ENCODE measurements at regions of chr6 and their contacts with region 1.

Region 1: DNA sequence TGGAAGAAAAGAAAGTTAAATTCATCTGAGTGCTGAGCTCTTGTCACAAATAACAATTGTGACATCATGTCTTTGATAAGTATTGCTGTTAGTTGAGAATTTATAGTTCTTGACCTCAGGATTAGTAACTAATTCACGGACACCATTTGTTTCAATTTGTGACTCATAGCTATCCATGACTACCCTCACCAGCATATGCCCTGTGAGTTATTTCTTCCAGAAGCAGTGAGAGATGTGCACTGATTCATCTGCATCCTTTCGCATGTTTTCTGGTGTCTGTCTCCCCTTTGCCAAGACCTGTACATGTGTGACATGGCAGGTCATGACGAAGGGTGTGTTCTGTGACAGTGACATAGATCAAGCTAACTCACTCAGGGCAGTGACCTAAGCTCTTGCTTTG is 86.9 kb downstream of the SOBP start:
- DNase-seq: peak in 1 of 2 experiments; percentile 66
- H3K4me3 ChIP-seq: no peak overlapping the region
- H3K27ac ChIP-seq: no peak overlapping the region
- H3K4me1 ChIP-seq: no peaks in the 10 kb centered on the region
- H3K27me3 ChIP-seq: no peaks in the 10 kb centered on the region
- CTCF ChIP-seq: no peak

Region 2: DNA sequence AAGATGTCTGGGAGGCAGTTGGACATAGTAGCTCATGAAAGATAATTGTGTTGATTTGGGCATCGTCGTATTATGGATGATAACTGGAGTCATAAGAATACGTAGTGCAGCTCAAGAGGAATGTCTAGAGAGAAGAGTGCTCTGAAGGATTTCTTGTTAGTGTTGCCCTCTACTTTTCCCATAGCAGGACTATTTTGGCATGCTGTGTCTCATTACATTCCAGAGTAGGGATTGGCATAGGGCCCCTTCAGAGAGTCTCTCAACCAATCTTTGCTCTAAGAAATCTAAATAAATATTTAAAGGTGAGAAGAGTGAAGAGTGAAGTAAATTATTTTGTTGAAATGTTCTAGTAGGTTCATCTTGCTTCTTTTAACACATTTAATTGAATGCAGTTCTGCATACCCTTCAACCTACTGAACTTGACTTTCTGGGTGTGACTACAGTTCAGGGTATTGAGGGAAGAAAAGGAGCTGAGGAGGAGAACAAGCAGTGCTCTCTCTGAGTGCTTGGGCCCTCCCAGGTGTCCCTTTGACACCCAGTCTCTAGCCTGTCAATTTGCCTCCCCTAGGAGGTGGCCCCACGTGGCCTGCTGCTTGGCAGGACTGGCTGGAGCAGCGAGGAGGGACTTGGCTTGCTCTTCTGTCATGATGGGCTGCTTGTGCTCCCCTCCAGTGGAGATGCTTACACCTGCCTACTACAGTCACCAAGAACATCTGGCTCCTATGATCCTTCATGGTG is 53.6 kb before region 1 on chr6:
- CTCF ChIA-PET with region 1: no interaction called
- POLR2A ChIA-PET with region 1: no interaction called
- intact Hi-C with region 1: no loop called
- DNase-seq: no peak
- H3K4me3 ChIP-seq: no peak overlapping the region
- H3K27ac ChIP-seq: no peak overlapping the region
- H3K4me1 ChIP-seq: no peaks in the 10 kb centered on the region
- H3K27me3 ChIP-seq: no peaks in the 10 kb centered on the region
- CTCF ChIP-seq: no peak

Region 3: GRCh38 chr6:108436761-108437160 is 859.9 kb after region 1 on chr6:
- CTCF ChIA-PET with region 1: interaction called, 10 read pairs
- POLR2A ChIA-PET with region 1: no interaction called
- intact Hi-C with region 1: no loop called
- DNase-seq: no peak
- H3K4me3 ChIP-seq: no peak overlapping the region
- H3K27ac ChIP-seq: no peak overlapping the region
- H3K4me1 ChIP-seq: no peaks in the 10 kb centered on the region
- H3K27me3 ChIP-seq: no peaks in the 10 kb centered on the region
- CTCF ChIP-seq: no peak

Measured in PC-9 (cell line).